RWPE1 (cell line): ENCODE measurements at regions of chr6 and their contacts with region 1.

Region 1: GRCh38 chr6:36851149-36851614 is 11.9 kb upstream of the CPNE5 start:
- DNase-seq: peak; percentile 51
- H3K27ac ChIP-seq: no peak overlapping the region
- CTCF ChIP-seq: peak; percentile 75

Region 2: DNA sequence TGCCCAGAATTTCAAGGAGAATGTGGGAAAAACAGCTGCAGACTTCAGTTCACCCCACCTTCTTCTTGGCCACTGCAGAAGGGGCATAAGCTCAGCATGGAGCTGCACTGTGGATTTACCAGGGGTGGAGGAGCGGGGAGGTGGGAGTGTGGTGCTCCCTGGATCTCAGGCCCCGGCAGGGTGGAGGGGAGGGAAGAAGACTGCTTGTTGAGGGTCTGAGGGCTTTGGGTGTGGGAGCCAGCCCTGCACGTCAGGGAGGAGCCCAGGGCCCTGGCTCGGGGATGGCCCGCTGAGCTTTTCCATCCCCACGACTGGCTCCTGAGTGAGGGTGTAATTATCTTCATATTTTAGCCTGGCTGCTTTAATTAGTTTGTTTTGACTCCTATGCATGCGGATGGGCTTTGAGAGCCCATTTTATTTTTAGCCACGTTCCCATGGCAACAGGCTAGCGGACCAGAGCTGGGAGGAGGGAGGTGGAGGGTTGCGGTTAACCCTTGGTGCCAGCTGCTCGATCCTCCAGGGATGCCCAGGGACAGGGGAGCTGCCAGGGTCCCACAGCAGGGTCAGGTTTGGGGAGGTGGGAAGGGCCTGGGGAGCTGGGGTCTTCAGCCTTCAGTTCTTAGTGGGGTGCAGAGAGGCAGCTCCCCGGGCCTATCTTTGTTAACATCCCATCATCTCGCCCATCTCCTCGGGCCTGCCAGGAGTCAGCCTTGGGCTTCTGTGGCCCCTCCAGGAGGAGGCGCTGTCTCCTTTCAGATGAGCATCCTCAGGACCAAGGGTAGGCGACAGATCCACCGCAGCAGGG is 85.4 kb before region 1 on chr6:
- CTCF ChIA-PET with region 1: interaction called, 70 read pairs
- POLR2A ChIA-PET with region 1: no interaction called
- DNase-seq: peak; percentile 77
- H3K27ac ChIP-seq: no peak overlapping the region
- CTCF ChIP-seq: peak; percentile 78

Region 3: GRCh38 chr6:36793913-36794712 is 57.1 kb before region 1 on chr6:
- CTCF ChIA-PET with region 1: no interaction called
- POLR2A ChIA-PET with region 1: no interaction called
- DNase-seq: no peak
- H3K27ac ChIP-seq: no peak overlapping the region
- CTCF ChIP-seq: no peak

Region 4: DNA sequence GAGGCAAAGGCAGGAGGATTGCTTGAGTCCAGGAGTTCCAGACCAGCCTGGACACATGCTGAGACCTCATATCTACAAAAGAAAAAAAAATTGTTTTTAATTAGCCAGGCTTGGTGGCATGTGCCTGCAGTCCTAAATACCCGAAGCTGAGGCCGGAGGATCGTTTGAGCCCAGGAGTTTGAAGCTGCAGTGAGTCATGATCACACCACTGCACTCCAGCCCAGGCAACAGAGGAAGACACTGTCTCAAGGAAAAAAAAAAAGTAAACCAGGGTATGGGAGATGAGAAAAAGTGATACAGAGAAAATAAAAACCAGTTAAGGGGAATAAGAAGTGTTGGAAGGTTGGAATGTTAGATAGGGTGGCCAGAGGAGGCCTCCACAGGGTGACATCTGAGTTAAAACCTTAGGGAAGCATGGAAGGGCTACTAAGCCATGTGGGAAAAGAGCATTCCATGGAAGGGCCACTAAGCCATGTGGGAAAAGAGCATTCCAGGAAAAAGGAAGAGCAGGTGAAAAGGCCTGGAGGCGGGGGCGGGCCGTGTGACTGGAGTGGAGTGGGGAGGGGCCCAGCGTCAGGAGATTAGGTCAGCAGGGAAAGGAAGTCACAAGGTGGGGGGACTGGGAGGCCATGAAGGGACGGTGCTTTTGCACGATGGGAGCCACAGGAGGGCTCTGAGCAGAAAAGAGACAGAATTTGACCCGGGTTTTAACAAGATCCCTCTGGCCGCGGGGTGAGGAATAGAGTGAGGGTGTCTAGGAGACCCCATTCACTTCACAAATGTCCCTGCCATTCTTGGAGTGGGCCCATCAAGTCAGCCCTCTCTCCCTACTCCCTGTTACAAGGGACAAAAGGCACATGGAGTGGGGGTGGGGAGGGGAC is 30.2 kb before region 1 on chr6:
- CTCF ChIA-PET with region 1: no interaction called
- POLR2A ChIA-PET with region 1: no interaction called
- DNase-seq: no peak
- H3K27ac ChIP-seq: no peak overlapping the region
- CTCF ChIP-seq: no peak